ENCODE measurements at regions of chr20 and their contacts with region 1.

Region 1: DNA sequence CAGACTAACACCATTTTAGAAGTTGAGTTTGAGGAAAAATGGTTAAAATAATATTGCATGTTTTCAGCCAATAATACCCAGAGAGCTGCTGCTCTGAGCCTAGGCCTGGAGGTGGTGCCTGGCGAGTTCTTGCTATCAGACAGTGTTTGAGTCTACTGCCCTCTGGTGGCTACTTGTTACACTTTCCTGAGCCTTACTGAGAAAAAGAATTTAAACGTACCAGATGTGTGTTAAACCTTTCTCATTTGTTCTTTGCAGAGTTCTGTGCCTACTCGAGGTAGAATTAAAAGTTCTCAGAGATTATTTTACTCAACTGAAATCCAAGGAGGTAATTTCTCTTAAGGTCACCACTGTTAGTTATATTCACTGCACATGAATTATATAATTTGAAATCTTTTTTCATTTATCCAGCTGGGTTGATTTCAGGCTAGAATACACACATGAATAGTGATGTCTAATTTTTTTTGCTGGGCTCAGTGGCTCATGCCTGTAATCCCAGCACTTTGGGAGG is 38.2 kb downstream of the SHLD1 start:
- DNase-seq: peak; percentile 79 to 84 (median 82)
- H3K4me3 ChIP-seq: no peak overlapping the region
- H3K4me3 Mint-ChIP-seq: no peak overlapping the region
- H3K27ac ChIP-seq: no peak overlapping the region
- H3K27ac Mint-ChIP-seq: peak overlapping the region in 6 of 7 donors; percentile 29 to 87 (median 72)
- H3K4me1 ChIP-seq: peaks cover 14% of the 10 kb centered on the region
- H3K4me1 Mint-ChIP-seq: peaks cover 9 to 20% (median 11%) of the 10 kb centered on the region in 4 donors
- H3K27me3 ChIP-seq: no peaks in the 10 kb centered on the region
- H3K27me3 Mint-ChIP-seq: no peaks in the 10 kb centered on the region

Region 2: GRCh38 chr20:5557123-5557522 is 231.3 kb before region 1 on chr20:
- CTCF ChIA-PET with region 1: interaction called, 50 read pairs
- POLR2A ChIA-PET with region 1: no interaction called
- intact Hi-C with region 1: loop called (anchors 2 kb)
- DNase-seq: peak; percentile 24 to 47 (median 38)
- H3K4me3 ChIP-seq: no peak overlapping the region
- H3K4me3 Mint-ChIP-seq: no peak overlapping the region
- H3K27ac ChIP-seq: no peak overlapping the region
- H3K27ac Mint-ChIP-seq: peak overlapping the region in 3 of 7 donors; percentile 8 to 87 (median 33)
- H3K4me1 ChIP-seq: no peaks in the 10 kb centered on the region
- H3K4me1 Mint-ChIP-seq: peaks cover 0 to 4% (median 3%) of the 10 kb centered on the region in 4 donors
- H3K27me3 ChIP-seq: no peaks in the 10 kb centered on the region
- H3K27me3 Mint-ChIP-seq: no peaks in the 10 kb centered on the region

Region 3: DNA sequence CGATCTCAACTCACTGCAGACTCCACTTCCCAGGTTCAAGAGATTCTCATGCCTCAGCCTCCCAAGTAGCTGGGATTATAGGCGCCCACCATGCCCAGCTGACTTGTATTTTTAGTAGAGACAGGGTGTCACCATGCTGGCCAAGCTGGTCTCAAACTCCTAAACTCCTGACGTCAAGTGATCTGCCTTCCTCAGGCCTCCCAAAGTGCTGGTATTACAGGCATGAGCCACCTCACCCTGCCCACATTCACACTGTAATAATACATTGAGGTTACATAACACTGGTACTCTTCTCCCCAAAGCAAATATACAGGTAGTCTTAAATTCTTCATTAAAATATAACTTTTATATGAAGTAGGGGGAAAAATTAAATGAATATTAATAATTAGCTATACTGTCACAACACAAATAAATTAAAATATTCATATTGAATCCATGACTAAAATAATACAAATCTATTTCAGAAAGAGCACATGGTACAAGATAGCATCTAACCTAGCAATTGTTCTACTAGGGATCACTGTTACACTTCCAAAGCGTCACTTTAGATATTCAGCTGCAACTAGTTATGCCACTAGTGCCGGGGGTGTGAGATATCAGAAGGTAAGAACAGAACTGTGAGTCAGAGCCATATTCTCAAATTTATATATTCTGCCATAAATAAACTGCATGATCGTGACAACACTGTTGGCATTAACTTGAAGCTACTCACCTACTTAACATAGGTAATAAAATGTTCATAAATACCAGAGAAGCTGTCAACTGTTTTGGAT is 207.3 kb before region 1 on chr20:
- CTCF ChIA-PET with region 1: interaction called, 16 read pairs
- POLR2A ChIA-PET with region 1: no interaction called
- intact Hi-C with region 1: no loop called
- DNase-seq: no peak
- H3K4me3 ChIP-seq: no peak overlapping the region
- H3K4me3 Mint-ChIP-seq: no peak overlapping the region
- H3K27ac ChIP-seq: no peak overlapping the region
- H3K27ac Mint-ChIP-seq: peak overlapping the region in 1 of 7 donors; percentile 30
- H3K4me1 ChIP-seq: no peaks in the 10 kb centered on the region
- H3K4me1 Mint-ChIP-seq: peaks cover 7 to 32% (median 18%) of the 10 kb centered on the region in 4 donors
- H3K27me3 ChIP-seq: no peaks in the 10 kb centered on the region
- H3K27me3 Mint-ChIP-seq: no peaks in the 10 kb centered on the region

Region 4: DNA sequence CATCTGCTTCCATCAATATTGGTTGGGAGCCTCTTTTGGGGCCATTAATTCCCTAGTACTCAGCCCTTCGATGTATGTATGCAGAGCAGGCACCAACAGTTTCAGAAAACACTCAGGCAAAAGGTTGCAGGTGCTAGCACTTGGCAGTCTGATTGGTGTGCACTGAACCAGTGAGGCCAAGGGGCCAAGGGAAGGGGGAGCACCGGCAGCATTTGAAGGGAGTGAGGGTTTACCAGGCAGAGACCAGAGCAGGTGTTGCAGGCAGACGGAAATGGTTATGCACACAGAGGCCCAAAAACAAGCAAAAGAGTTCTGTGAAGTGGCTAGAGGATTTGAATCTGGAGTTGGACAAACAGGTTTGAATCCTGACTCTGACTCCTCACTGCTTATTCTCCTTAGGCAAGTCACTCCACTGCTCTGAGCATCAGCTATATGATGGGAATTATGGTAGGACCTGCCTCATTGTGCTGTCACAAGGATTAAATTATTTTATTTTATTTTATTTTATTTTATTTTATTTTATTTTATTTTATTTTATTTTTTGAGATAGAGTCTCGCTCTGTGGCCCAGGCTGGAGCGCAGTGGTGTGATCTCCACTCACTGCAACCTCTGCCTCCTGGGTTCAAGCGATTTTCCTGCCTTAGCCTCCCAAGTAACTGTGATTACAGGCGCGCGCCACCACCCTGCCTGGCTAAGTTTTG is 96.4 kb before region 1 on chr20:
- CTCF ChIA-PET with region 1: interaction called, 3 read pairs
- POLR2A ChIA-PET with region 1: no interaction called
- intact Hi-C with region 1: loop called (anchors 1 kb)
- DNase-seq: no peak
- H3K4me3 ChIP-seq: no peak overlapping the region
- H3K4me3 Mint-ChIP-seq: no peak overlapping the region
- H3K27ac ChIP-seq: no peak overlapping the region
- H3K27ac Mint-ChIP-seq: peak overlapping the region in 3 of 7 donors; percentile 42 to 53 (median 42)
- H3K4me1 ChIP-seq: no peaks in the 10 kb centered on the region
- H3K4me1 Mint-ChIP-seq: peaks cover 0 to 4% (median 3%) of the 10 kb centered on the region in 4 donors
- H3K27me3 ChIP-seq: no peaks in the 10 kb centered on the region
- H3K27me3 Mint-ChIP-seq: no peaks in the 10 kb centered on the region

Region 5: GRCh38 chr20:5844063-5844681 is 55.7 kb after region 1 on chr20:
- CTCF ChIA-PET with region 1: no interaction called
- POLR2A ChIA-PET with region 1: interaction called, 4 read pairs
- intact Hi-C with region 1: loop called (anchors 2 kb)
- DNase-seq: peak; percentile 23 to 79 (median 40)
- H3K4me3 ChIP-seq: no peak overlapping the region
- H3K4me3 Mint-ChIP-seq: peak overlapping the region; percentile 18 to 77 (median 72)
- H3K27ac ChIP-seq: peak overlapping the region; percentile 62
- H3K27ac Mint-ChIP-seq: peak overlapping the region; percentile 88 to 98 (median 93)
- H3K4me1 ChIP-seq: peaks cover 67% of the 10 kb centered on the region
- H3K4me1 Mint-ChIP-seq: peaks cover 53 to 69% (median 62%) of the 10 kb centered on the region in 4 donors
- H3K27me3 ChIP-seq: no peaks in the 10 kb centered on the region
- H3K27me3 Mint-ChIP-seq: no peaks in the 10 kb centered on the region

Region 6: GRCh38 chr20:6008254-6008653 is 219.8 kb after region 1 on chr20:
- CTCF ChIA-PET with region 1: interaction called, 3 read pairs
- POLR2A ChIA-PET with region 1: no interaction called
- intact Hi-C with region 1: loop called (anchors 1 kb)
- DNase-seq: no peak
- H3K4me3 ChIP-seq: no peak overlapping the region
- H3K4me3 Mint-ChIP-seq: peak overlapping the region in 5 of 8 donors; percentile 13 to 99 (median 41)
- H3K27ac ChIP-seq: no peak overlapping the region
- H3K27ac Mint-ChIP-seq: peak overlapping the region in 3 of 7 donors; percentile 37 to 86 (median 72)
- H3K4me1 ChIP-seq: peaks cover 33% of the 10 kb centered on the region
- H3K4me1 Mint-ChIP-seq: peaks cover 28 to 57% (median 36%) of the 10 kb centered on the region in 4 donors
- H3K27me3 ChIP-seq: no peaks in the 10 kb centered on the region
- H3K27me3 Mint-ChIP-seq: no peaks in the 10 kb centered on the region

Region 7: DNA sequence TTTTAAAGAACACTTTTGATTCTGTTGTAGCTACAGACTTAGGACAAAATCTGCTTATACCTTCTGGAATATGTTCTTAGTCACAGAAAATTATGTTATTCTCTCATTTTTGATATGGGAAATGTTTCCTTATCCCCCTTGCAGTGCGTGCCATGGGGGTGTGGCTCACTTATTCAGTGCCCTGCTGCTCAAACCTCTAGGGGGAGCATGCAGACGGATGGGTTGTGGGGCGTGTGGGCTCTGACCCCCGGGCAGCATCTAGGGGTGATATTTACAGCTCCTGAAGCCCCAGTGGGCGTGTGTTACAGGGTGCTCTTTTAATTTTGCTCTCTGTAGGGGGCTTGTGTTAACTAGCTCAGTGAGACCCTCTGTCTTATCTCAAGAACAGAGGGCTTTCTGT is 395.6 kb after region 1 on chr20:
- CTCF ChIA-PET with region 1: no interaction called
- POLR2A ChIA-PET with region 1: no interaction called
- intact Hi-C with region 1: no loop called
- DNase-seq: no peak
- H3K4me3 ChIP-seq: no peak overlapping the region
- H3K4me3 Mint-ChIP-seq: no peak overlapping the region
- H3K27ac ChIP-seq: no peak overlapping the region
- H3K27ac Mint-ChIP-seq: no peak overlapping the region
- H3K4me1 ChIP-seq: no peaks in the 10 kb centered on the region
- H3K4me1 Mint-ChIP-seq: no peaks in the 10 kb centered on the region
- H3K27me3 ChIP-seq: no peaks in the 10 kb centered on the region
- H3K27me3 Mint-ChIP-seq: peaks cover 8 to 9% of the 10 kb centered on the region in 2 donors